ENCODE measurements at regions of chr10 and their contacts with region 1.

Region 1: DNA sequence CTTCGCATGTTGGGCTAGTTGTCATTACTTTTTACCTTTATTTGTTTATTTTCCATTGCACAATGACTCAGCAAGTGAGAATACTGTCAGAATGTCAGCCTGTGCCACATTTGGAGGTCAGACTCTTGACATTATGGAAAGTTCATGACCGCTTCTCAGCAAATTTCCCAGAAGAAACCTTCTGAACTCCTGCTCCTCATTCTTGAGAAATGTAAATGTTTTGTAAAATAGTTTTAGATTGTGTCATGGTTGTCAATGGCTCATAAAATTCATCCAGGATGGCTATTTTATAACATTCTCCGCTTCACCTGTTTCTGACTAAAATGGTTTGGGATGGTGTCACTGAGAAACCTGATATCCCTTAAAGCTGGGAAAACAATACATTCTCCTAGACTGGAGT is 671.6 kb downstream of the GATA3 start:
- DNase-seq: no peak
- H3K4me3 ChIP-seq: no peak overlapping the region
- H3K27ac ChIP-seq: no peak overlapping the region
- H3K4me1 ChIP-seq: no peaks in the 10 kb centered on the region
- H3K27me3 ChIP-seq: peaks cover 3% of the 10 kb centered on the region
- CTCF ChIP-seq: no peak
- EP300 ChIP-seq: no peak
- POLR2A ChIP-seq: no peak

Region 2: GRCh38 chr10:8628186-8628759 is 97.8 kb before region 1 on chr10:
- in situ Hi-C with region 1: loop called in 1 of 4 experiments (anchors 25 kb)
- intact Hi-C with region 1: no loop called
- DNase-seq: no peak
- H3K4me3 ChIP-seq: no peak overlapping the region
- H3K27ac ChIP-seq: no peak overlapping the region
- H3K4me1 ChIP-seq: no peaks in the 10 kb centered on the region
- H3K27me3 ChIP-seq: no peaks in the 10 kb centered on the region
- CTCF ChIP-seq: no peak
- EP300 ChIP-seq: no peak
- POLR2A ChIP-seq: no peak